ENCODE measurements at regions of chr12 and their contacts with region 1.

Region 1: GRCh38 chr12:132003846-132004245 is 54.1 kb downstream of the EP400 start:
- DNase-seq: no peak
- ATAC-seq: no peak
- H3K4me3 ChIP-seq: no peak overlapping the region
- H3K27ac ChIP-seq: no peak overlapping the region
- H3K4me1 ChIP-seq: no peaks in the 10 kb centered on the region
- H3K27me3 ChIP-seq: no peaks in the 10 kb centered on the region
- CTCF ChIP-seq: no peak

Region 2: DNA sequence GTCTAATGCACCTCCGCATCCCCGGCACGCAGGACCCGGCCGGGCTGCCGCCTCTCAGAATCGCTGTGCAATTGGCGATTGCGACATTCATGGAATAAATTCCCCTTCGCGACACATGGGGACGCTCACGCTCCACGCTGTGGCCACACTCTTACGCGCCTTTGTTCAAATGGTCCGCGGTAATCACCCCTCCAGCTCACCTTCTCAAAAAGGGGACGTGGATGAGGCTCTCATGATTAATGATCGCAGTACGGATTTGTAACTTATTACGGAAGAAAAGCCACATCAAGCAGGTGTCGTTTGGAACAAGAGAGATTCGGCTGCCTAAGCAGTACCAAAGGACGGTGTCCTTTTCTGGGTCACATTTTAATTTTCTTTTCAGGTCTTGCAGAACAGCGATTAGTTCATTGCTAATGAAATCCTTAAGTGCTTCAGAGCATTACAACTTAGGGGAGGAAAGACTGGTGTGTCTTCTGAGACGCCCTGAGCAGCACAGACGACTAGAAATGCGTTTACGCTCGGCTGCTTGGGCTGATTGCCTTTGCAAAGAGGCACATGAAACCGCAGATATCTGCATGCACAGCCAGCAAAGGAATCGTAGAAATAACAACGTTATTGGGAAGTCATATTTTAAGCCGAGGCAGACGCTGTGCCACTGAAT is 1087.5 kb before region 1 on chr12:
- intact Hi-C with region 1: loop called in 5 of 10 experiments (anchors 5 to 10 kb)
- DNase-seq: peak; percentile 49 to 53
- ATAC-seq: peak; percentile 80 to 92 (median 86)
- H3K4me3 ChIP-seq: peak overlapping the region in 5 of 10 donors; percentile 9 to 42 (median 29)
- H3K27ac ChIP-seq: no peak overlapping the region
- H3K4me1 ChIP-seq: peaks cover 0 to 5% (median 0%) of the 10 kb centered on the region in 9 donors
- H3K27me3 ChIP-seq: peaks cover 0 to 26% (median 12%) of the 10 kb centered on the region in 7 donors
- CTCF ChIP-seq: peak; percentile 84 to 99 (median 92)

Region 3: DNA sequence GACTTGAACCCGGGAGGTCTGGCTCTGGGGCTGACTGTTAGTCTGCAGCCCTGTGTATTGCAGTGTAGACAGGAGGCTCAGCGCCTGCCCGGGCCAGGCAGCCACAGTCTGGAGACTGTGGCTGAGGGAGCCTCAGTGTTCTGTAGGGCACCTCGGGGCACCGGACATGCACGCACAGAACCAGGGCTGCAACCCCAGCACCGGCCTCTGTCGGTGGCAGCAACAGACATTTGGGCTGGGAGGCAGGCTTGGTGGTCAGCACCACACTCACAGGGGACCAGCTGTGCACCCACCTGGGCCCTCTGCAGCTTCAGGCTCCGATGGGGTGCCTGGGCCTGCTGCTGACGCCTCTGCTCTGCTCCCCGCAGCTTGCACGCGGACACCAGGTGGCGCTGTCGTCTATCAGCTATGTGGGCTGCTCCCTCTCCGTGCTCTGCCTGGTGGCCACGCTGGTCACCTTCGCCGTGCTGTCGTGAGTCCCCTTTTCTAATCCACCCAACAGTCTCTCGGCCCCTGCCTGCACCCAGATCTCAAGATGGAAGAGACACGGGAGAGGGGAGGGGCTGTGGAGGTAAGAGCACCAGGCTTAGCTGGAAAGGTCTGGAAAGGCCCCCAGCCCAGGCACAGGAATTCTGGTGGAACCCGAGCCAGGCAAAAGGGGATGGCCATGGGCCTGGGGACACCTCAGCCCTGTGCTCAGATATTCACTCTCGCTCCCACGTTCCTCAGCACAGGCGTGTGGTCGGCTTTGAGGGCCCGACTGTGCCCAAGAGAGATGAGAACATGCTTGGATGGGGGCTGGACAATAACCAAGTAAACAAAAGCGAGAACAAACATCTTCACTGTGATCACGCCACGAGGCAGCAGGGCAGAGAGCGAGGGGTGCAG is 899.1 kb before region 1 on chr12:
- intact Hi-C with region 1: loop called in 1 of 10 experiments (anchors 10 kb)
- DNase-seq: peak; percentile 87 to 90
- ATAC-seq: peak; percentile 84 to 96 (median 92)
- H3K4me3 ChIP-seq: no peak overlapping the region
- H3K27ac ChIP-seq: peak overlapping the region in 3 of 10 donors; percentile 11 to 48 (median 12)
- H3K4me1 ChIP-seq: peaks cover 0 to 17% (median 12%) of the 10 kb centered on the region in 9 donors
- H3K27me3 ChIP-seq: no peaks in the 10 kb centered on the region
- CTCF ChIP-seq: peak; percentile 74 to 96 (median 93)

Region 4: GRCh38 chr12:131608740-131609690 is 394.8 kb before region 1 on chr12:
- intact Hi-C with region 1: loop called in 5 of 10 experiments (anchors 5 to 10 kb)
- DNase-seq: peak; percentile 71 to 75
- ATAC-seq: peak; percentile 71 to 93 (median 88)
- H3K4me3 ChIP-seq: peak overlapping the region in 3 of 10 donors; percentile 2 to 13 (median 10)
- H3K27ac ChIP-seq: no peak overlapping the region
- H3K4me1 ChIP-seq: peaks cover 0 to 45% (median 0%) of the 10 kb centered on the region in 9 donors
- H3K27me3 ChIP-seq: peaks cover 0 to 53% (median 14%) of the 10 kb centered on the region in 7 donors
- CTCF ChIP-seq: peak; percentile 70 to 93 (median 84)

Region 5: GRCh38 chr12:131621701-131622421 is 382.0 kb before region 1 on chr12:
- intact Hi-C with region 1: loop called in 1 of 10 experiments (anchors 10 kb)
- DNase-seq: no peak
- ATAC-seq: peak in 4 of 8 donors; percentile 17 to 39 (median 24)
- H3K4me3 ChIP-seq: no peak overlapping the region
- H3K27ac ChIP-seq: no peak overlapping the region
- H3K4me1 ChIP-seq: peaks cover 0 to 16% (median 7%) of the 10 kb centered on the region in 9 donors
- H3K27me3 ChIP-seq: peaks cover 0 to 70% (median 54%) of the 10 kb centered on the region in 7 donors
- CTCF ChIP-seq: no peak

Region 6: DNA sequence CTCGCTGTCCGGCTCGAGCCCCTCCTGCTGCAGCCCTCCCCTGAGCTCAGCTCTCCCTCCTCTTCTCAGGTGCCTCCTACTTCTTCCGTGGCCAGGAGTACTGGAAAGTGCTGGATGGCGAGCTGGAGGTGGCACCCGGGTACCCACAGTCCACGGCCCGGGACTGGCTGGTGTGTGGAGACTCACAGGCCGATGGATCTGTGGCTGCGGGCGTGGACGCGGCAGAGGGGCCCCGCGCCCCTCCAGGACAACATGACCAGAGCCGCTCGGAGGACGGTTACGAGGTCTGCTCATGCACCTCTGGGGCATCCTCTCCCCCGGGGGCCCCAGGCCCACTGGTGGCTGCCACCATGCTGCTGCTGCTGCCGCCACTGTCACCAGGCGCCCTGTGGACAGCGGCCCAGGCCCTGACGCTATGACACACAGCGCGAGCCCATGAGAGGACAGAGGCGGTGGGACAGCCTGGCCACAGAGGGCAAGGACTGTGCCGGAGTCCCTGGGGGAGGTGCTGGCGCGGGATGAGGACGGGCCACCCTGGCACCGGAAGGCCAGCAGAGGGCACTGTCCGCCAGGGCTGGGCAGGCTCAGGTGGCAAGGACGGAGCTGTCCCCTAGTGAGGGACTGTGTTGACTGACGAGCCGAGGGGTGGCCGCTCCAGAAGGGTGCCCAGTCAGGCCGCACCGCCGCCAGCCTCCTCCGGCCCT is 152.8 kb before region 1 on chr12:
- intact Hi-C with region 1: loop called in 4 of 10 experiments (anchors 1 to 10 kb)
- DNase-seq: peak in 1 of 2 donors; percentile 9
- ATAC-seq: peak in 6 of 8 donors; percentile 12 to 91 (median 76)
- H3K4me3 ChIP-seq: no peak overlapping the region
- H3K27ac ChIP-seq: no peak overlapping the region
- H3K4me1 ChIP-seq: peaks cover 0 to 10% (median 0%) of the 10 kb centered on the region in 9 donors
- H3K27me3 ChIP-seq: peaks cover 0 to 27% (median 21%) of the 10 kb centered on the region in 7 donors
- CTCF ChIP-seq: peak in 4 of 9 donors; percentile 61 to 85 (median 71)

Region 7: DNA sequence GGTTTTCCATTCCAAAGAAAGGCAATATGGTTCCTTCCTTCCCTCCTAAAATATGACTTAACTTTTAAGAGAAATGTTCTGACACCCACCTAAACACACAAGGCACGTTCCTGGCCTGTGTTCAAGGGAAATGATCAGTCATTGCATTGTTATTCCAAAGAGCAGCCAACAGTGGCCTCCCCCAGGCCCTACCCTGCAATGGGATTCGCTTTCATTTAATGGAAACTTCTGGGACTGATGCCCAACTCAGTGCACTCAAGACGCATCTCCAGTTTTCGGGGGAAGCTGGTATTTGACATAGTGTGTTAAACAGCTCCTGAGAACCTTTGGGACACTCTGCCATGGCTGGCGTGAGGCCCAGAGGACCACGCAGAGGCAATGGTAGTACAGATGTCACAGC is 74.3 kb after region 1 on chr12:
- intact Hi-C with region 1: no loop called
- DNase-seq: peak in 1 of 2 donors; percentile 43
- ATAC-seq: peak in 6 of 8 donors; percentile 16 to 70 (median 54)
- H3K4me3 ChIP-seq: no peak overlapping the region
- H3K27ac ChIP-seq: peak overlapping the region in 1 of 10 donors; percentile 3
- H3K4me1 ChIP-seq: peaks cover 0 to 46% (median 6%) of the 10 kb centered on the region in 9 donors
- H3K27me3 ChIP-seq: no peaks in the 10 kb centered on the region
- CTCF ChIP-seq: no peak